ENCODE measurements at regions of chr9 and their contacts with region 1.

Region 1: GRCh38 chr9:129783516-129784361 is 19.2 kb upstream of the TOR1B start:
- DNase-seq: peak; percentile 56
- ATAC-seq: peak; percentile 94

Region 2: GRCh38 chr9:129131300-129132145 is 652.2 kb before region 1 on chr9:
- intact Hi-C with region 1: loop called in 1 of 2 experiments (anchors 5 kb)
- DNase-seq: peak; percentile 79
- ATAC-seq: peak; percentile 88 to 91

Region 3: DNA sequence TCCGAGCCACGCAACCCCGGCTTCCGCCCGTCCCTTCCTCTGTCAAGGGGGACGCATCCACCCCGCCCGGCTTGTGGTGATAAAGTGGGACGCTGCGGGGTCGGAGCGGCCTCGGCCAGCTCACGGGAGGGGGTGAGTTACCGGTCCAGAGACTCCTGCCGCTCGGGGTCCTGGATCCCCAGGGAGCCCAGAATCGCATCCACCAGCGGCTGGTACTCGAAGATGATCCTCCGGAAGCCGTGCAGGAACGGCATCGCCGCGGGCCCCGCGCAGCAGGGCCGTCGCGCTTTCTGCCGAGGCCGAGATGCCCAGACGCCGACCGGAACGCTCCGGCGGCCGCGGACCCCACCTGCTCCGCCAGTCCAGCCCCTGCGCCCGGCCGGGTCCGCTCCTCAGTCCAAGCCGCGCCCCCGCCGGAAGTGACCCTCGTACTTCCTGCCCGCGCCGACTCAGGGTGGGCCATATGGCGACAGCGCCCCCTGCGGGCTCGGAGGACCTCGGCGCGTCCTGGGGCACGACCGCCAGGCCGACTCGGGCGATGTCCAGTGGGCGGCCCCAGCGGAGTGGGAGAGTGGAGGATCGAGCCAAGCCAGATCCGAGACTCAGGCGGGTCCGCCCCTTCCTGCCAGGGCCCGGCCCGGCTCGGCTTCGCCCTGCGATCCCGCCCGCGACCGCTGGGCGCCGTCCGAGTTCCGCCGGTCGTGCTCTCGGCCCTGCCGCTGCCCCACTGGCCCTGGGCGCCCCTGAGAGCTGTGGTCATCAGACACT is 141.8 kb before region 1 on chr9 and contains the start of gene ASB6:
- intact Hi-C with region 1: loop called (anchors 5 to 10 kb)
- DNase-seq: peak; percentile 97
- ATAC-seq: peak; percentile 96 to 97
- total RNA-seq, gene ASB6: 8.3 to 11.6 TPM

Region 4: GRCh38 chr9:129737479-129738274 is 46.1 kb before region 1 on chr9:
- intact Hi-C with region 1: loop called (anchors 1 to 5 kb)
- DNase-seq: peak; percentile 89
- ATAC-seq: peak; percentile 92 to 94